Activated naive CD4-positive, alpha-beta T cell treated with anti-CD3 and anti-CD28 coated beads, Interleukin-2, amount 10 ng/mL, durations not matched to agents 7 days and 5 days (primary cell): ENCODE measurements at regions of chrX and their contacts with region 1.

Region 1: DNA sequence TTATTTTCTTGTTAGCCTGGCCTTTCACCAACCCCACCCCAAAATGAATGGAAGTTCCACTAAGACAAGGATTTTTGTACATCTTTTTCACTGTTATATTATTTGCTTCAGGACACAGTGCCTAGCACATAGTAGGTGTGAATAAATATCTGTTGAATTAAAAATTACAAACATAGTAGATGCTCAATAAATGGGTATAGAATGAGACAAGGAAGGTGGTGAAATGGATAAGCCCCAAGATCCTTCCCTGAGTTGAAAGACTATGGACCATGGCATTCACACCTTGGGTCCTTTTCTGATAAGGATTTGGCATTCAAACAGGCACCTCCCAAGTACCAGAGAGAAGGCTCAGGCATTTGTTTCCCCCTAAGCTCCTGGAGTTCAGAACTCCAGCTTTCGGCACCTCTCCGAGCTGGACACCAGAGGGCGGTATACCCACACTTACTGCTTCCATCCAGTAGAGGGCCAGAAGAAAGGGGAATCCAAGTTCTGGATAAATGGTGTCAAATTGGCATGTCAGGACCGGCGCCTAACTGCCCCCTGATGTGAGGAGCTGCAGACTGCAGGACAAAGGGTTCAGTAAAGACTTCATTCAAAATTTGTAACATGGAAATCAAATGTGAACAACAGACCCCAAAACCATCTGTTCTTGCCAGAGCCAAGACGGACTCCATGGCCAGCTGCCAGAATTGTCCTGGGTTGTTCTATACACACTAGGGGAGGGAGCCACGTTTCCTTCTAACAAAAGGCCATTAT is 193.0 kb downstream of the GPC3 start:
- DNase-seq: peak; percentile 65
- H3K4me3 Mint-ChIP-seq: no peak overlapping the region
- H3K27ac Mint-ChIP-seq: no peak overlapping the region
- H3K4me1 Mint-ChIP-seq: no peaks in the 10 kb centered on the region
- H3K27me3 Mint-ChIP-seq: peaks cover 8% of the 10 kb centered on the region

Region 2: DNA sequence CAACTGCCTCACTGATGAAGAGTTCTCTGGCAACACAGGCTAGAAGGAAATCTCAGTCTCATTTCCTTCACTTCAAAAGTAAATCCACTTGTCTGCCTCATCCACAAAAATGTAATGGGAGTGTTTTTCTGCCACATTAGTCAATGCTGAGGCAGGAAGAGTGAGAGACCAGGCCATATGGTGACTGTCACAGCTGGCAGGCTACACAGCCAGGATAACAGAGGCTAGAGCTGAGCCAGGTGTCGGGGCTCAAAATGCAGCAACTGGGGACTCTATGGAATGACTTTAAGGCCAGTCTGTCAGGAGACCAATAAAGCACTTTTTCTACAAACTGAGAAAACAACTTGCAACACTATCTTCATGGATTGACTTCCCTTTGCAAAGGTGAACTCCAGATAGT is 11.2 kb before region 1 on chrX:
- CTCF ChIA-PET with region 1: interaction called, 11 read pairs
- DNase-seq: no peak
- H3K4me3 Mint-ChIP-seq: no peak overlapping the region
- H3K27ac Mint-ChIP-seq: no peak overlapping the region
- H3K4me1 Mint-ChIP-seq: no peaks in the 10 kb centered on the region
- H3K27me3 Mint-ChIP-seq: no peaks in the 10 kb centered on the region

Region 3: GRCh38 chrX:133921764-133922389 is 129.5 kb after region 1 on chrX:
- CTCF ChIA-PET with region 1: interaction called, 20 read pairs
- DNase-seq: peak; percentile 47
- H3K4me3 Mint-ChIP-seq: no peak overlapping the region
- H3K27ac Mint-ChIP-seq: no peak overlapping the region
- H3K4me1 Mint-ChIP-seq: peaks cover 26% of the 10 kb centered on the region
- H3K27me3 Mint-ChIP-seq: no peaks in the 10 kb centered on the region

Region 4: GRCh38 chrX:134020910-134021309 is 228.5 kb after region 1 on chrX:
- CTCF ChIA-PET with region 1: interaction called, 32 read pairs
- DNase-seq: no peak
- H3K4me3 Mint-ChIP-seq: no peak overlapping the region
- H3K27ac Mint-ChIP-seq: no peak overlapping the region
- H3K4me1 Mint-ChIP-seq: peaks cover 4% of the 10 kb centered on the region
- H3K27me3 Mint-ChIP-seq: no peaks in the 10 kb centered on the region

Region 5: GRCh38 chrX:134026565-134027311 is 234.4 kb after region 1 on chrX:
- CTCF ChIA-PET with region 1: interaction called, 32 read pairs
- DNase-seq: peak; percentile 56
- H3K4me3 Mint-ChIP-seq: peak overlapping the region; percentile 18
- H3K27ac Mint-ChIP-seq: no peak overlapping the region
- H3K4me1 Mint-ChIP-seq: peaks cover 13% of the 10 kb centered on the region
- H3K27me3 Mint-ChIP-seq: no peaks in the 10 kb centered on the region

Region 6: DNA sequence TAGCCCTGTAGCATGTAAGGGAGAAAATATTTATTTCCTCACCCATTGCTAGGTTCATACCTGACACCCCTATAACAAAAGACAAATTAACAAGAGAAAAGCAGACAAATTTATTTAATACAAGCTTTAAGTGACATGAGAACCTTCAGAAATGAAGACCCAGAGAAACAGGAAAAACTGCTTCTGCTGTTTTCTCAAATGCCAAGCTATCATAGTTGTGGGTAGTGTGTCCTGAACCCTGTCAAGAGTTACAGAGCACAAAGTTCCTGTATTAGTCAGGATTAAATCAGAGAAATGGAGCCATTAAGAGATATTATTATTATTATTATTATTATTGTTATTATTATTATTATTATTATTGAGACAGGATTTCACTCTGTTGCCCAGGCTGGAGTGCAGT is 462.1 kb after region 1 on chrX:
- CTCF ChIA-PET with region 1: interaction called, 11 read pairs
- DNase-seq: no peak
- H3K4me3 Mint-ChIP-seq: no peak overlapping the region
- H3K27ac Mint-ChIP-seq: no peak overlapping the region
- H3K4me1 Mint-ChIP-seq: peaks cover 7% of the 10 kb centered on the region
- H3K27me3 Mint-ChIP-seq: peaks cover 4% of the 10 kb centered on the region